ENCODE measurements at regions of chr16 and their contacts with region 1.

Region 1: DNA sequence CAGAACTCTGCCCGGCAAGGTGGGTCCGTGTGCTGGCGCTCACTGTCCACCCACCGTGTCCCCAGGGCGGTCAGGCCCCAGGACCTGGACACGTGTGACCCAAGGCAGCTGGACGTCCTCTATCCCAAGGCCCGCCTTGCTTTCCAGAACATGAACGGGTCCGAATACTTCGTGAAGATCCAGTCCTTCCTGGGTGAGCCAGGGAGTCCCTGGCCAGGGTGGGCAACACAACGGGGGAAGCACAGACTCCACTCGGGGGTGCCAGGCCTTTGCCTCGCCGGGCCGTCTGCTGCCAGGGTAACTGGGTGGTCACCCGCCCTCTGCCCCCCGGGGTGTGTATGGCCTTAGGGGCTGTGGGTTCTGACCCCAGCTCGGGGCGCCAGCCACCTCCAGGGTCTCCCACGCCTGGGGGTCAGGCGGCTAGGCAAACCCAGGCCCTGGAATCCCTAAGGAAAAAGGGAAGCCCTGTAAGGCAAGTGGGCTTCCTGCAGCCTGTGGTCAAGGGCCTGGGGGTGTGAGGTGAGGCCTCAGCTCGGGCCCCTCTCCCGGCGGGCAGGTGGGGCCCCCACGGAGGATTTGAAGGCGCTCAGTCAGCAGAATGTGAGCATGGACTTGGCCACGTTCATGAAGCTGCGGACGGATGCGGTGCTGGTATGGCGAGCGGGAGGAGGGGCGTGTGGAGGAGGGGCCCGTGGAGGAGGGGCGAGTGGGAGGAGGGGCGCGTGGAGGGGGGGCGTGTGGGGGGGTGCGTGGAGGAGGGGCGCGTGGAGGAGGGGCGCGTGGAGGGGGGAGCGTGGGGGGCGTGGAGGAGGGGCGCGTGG is 6.5 kb downstream of the MSLN start:
- DNase-seq: peak; percentile 25 to 50 (median 27)
- H3K4me3 ChIP-seq: no peak overlapping the region
- H3K27ac ChIP-seq: no peak overlapping the region
- H3K4me1 ChIP-seq: peaks cover 0 to 11% (median 0%) of the 10 kb centered on the region in 4 experiments
- H3K27me3 ChIP-seq: no peaks in the 10 kb centered on the region

Region 2: DNA sequence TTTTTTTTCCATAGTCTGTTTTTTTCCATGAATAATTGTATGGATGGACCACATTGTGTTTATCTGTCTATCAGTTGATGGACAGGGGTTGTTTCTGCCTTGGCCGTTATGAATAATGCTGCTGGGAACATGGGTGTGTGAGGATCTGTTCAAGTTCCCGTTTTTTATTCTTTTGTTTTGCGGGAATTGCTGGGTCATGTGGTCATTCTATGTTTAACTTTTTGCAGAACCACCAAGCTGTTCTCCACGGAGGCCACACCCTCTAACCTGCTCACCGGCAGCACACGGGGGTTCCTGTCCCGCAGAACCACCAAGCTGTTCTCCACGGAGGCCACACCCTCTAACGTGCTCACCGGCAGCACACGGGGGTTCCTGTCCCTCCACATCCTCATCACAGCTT is 12.4 kb before region 1 on chr16:
- CTCF ChIA-PET with region 1: interaction called, 10 read pairs
- POLR2A ChIA-PET with region 1: no interaction called
- DNase-seq: peak; percentile 49 to 90 (median 87)
- H3K4me3 ChIP-seq: peak overlapping the region in 4 of 7 experiments; percentile 26 to 58 (median 38)
- H3K27ac ChIP-seq: peak overlapping the region in 1 of 2 experiments; percentile 0
- H3K4me1 ChIP-seq: peaks cover 0 to 35% (median 24%) of the 10 kb centered on the region in 4 experiments
- H3K27me3 ChIP-seq: no peaks in the 10 kb centered on the region

Region 3: GRCh38 chr16:813204-813915 is 46.3 kb after region 1 on chr16:
- CTCF ChIA-PET with region 1: no interaction called
- POLR2A ChIA-PET with region 1: no interaction called
- DNase-seq: peak; percentile 36 to 57 (median 37)
- H3K4me3 ChIP-seq: no peak overlapping the region
- H3K27ac ChIP-seq: no peak overlapping the region
- H3K4me1 ChIP-seq: peaks cover 0 to 15% (median 6%) of the 10 kb centered on the region in 4 experiments
- H3K27me3 ChIP-seq: peaks cover 0 to 54% (median 13%) of the 10 kb centered on the region in 5 experiments

Region 4: GRCh38 chr16:842061-842476 is 75.0 kb after region 1 on chr16:
- CTCF ChIA-PET with region 1: no interaction called
- POLR2A ChIA-PET with region 1: no interaction called
- DNase-seq: peak in 2 of 3 donors; percentile 41 to 48
- H3K4me3 ChIP-seq: no peak overlapping the region
- H3K27ac ChIP-seq: no peak overlapping the region
- H3K4me1 ChIP-seq: peaks cover 0 to 2% (median 0%) of the 10 kb centered on the region in 4 experiments
- H3K27me3 ChIP-seq: peaks cover 0 to 3% (median 0%) of the 10 kb centered on the region in 5 experiments

Region 5: DNA sequence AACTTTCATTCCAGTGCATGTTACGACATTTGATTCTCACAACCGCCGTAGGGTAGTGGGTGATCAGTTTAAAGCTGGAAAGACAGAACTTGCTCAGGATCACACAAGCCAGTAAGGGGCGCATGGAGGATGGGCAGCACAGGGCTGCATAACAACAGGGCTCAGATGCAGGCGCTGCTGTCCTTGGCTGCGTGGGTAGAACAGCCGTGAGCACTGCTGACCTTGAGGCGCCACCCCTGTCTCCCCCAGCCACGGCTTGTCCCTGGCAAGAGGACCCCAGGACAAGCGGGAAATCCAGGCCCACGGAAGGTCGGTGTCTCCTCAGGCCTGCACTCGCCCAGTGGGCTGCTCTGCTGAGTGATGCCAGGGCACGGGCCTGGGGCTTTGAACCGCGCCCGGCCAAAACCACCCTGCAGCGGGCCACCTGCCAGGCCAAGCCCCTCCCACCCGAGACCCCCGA is 119.1 kb after region 1 on chr16:
- CTCF ChIA-PET with region 1: no interaction called
- POLR2A ChIA-PET with region 1: no interaction called
- DNase-seq: no peak
- H3K4me3 ChIP-seq: no peak overlapping the region
- H3K27ac ChIP-seq: no peak overlapping the region
- H3K4me1 ChIP-seq: no peaks in the 10 kb centered on the region
- H3K27me3 ChIP-seq: no peaks in the 10 kb centered on the region

Measured in common myeloid progenitor, CD34-positive (primary cell).